Kidney (tissue), 22 donors: ENCODE measurements at regions of chr9 and their contacts with region 1.

Region 1: GRCh38 chr9:134443168-134444037 is 117.1 kb downstream of the RXRA start:
- DNase-seq: peak; percentile 87 to 97 (median 88)
- H3K4me3 ChIP-seq: no peak overlapping the region
- H3K27ac ChIP-seq: no peak overlapping the region
- H3K4me1 ChIP-seq: peaks cover 0 to 20% (median 0%) of the 10 kb centered on the region in 3 donors
- H3K27me3 ChIP-seq: no peaks in the 10 kb centered on the region
- CTCF ChIP-seq: peak; percentile 97

Region 2: GRCh38 chr9:134171316-134172197 is 271.8 kb before region 1 on chr9:
- intact Hi-C with region 1: loop called (anchors 2 kb)
- DNase-seq: no peak
- H3K4me3 ChIP-seq: no peak overlapping the region
- H3K27ac ChIP-seq: peak overlapping the region in 1 of 2 donors; percentile 32
- H3K4me1 ChIP-seq: peaks cover 0 to 20% (median 10%) of the 10 kb centered on the region in 3 donors
- H3K27me3 ChIP-seq: no peaks in the 10 kb centered on the region
- CTCF ChIP-seq: no peak